ENCODE measurements at regions of chr6 and their contacts with region 1.

Region 1: DNA sequence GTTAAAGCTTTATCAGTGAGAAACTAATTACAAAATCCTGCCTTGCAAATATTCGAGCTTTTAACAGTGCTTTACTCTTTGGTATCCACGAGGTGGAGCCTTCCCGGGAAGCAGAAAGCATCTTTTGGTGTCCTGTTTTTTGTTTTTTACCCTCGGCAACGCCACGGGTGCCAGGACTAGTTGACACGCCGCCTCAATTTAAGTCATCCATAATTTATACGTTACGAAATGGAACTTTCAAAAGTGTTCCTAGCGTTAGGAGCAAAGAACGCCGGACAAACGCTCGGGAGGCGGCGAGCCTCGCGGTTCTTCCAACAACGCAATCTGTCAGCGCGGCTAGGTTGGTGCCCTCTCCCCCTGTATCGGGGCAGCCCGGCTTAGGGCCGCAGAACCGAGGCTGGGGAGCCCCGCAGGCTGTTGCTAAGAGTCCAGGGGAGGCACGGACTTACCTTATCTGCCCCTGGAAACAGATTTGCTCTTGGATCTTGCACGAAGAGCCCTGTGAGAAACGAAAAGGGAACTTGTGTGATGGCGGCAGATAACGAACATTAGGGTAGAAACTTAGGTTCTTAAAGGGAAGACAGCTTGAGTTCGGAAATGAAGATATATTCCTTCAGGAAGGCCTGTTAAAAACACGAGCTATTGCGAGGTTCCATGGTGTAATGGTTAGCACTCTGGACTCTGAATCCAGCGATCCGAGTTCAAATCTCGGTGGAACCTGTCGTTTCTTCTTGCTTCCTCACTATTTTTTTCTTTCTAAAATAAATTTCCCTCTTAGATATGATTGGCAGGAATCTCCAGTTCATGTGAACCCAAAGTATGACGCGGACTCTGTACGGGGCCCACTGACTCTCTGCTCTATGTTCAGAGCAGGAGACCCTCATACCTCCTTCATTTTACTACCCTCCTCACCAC is 46.2 kb upstream of the ZNF184 start:
- DNase-seq: peak; percentile 19 to 78 (median 71)
- ATAC-seq: peak; percentile 76 to 82
- H3K4me3 Mint-ChIP-seq: peak overlapping the region; percentile 88 to 95 (median 93)
- H3K27ac Mint-ChIP-seq: peak overlapping the region; percentile 79 to 95 (median 86)
- H3K4me1 Mint-ChIP-seq: peaks cover 7 to 23% (median 20%) of the 10 kb centered on the region in 4 donors
- H3K27me3 Mint-ChIP-seq: peaks cover 8 to 31% (median 15%) of the 10 kb centered on the region in 5 donors

Region 2: DNA sequence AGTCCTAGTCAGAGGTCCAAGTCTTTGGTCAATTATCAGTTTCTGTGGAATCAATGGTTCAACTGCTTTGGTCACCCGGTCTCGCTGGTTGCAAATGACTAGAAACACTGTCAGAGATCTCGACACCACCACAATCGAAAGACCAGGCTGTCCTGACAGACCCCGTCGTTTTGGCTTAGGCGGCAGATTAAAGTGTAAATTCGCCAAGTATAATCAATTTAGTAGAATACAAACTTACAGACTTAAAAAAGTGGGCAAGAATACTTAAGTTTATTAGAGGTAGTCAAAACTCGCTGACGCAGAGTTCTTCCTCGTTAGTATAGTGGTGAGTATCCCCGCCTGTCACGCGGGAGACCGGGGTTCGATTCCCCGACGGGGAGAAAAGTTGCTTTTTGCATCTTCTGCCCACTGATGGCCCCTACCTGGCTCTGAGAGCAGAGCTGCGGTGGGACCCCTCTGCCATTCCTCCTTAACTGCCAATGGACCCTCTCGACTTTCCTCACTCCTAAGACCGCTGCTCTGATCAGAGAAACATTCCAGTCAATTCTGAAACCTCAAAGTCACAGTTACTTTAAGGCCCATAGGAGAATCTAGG is 15.6 kb before region 1 on chr6:
- POLR2A ChIA-PET with region 1: interaction called, 12 read pairs
- DNase-seq: peak; percentile 62 to 90 (median 84)
- ATAC-seq: peak; percentile 59
- H3K4me3 Mint-ChIP-seq: peak overlapping the region; percentile 86 to 96 (median 92)
- H3K27ac Mint-ChIP-seq: peak overlapping the region; percentile 68 to 97 (median 88)
- H3K4me1 Mint-ChIP-seq: peaks cover 28 to 37% (median 29%) of the 10 kb centered on the region in 4 donors
- H3K27me3 Mint-ChIP-seq: peaks cover under 1 to 20% (median 11%) of the 10 kb centered on the region in 5 donors